ENCODE measurements at regions of chr1 and their contacts with region 1.

Region 1: GRCh38 chr1:233326811-233327650 is 493 bp upstream of the MAP3K21 start:
- DNase-seq: peak; percentile 93
- ATAC-seq: peak; percentile 96
- H3K4me3 Mint-ChIP-seq: peak overlapping the region; percentile 82
- H3K27ac Mint-ChIP-seq: peak overlapping the region; percentile 53
- H3K4me1 Mint-ChIP-seq: peaks cover 11% of the 10 kb centered on the region
- H3K27me3 Mint-ChIP-seq: no peaks in the 10 kb centered on the region
- CTCF ChIP-seq: no peak

Region 2: DNA sequence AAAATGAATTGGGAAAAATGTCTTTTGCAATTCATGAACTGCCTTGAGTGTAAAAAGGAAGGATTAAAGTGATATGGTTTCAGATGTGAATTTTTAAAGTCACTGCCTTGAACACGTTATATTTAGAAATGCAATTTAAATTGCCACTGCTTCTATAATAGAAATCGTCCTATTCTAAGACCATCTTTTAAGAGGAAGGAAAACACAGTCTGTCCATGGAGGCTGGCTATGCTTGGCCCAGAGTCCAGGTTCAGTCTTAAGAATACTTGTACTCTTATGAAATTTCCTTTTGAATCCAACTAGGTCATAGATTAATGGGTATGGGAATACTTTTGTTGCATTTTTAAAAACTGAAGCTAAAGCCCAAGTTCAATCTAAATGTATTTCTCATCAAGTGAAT is 117.5 kb before region 1 on chr1:
- CTCF ChIA-PET with region 1: no interaction called
- POLR2A ChIA-PET with region 1: no interaction called
- intact Hi-C with region 1: no loop called
- DNase-seq: no peak
- ATAC-seq: no peak
- H3K4me3 Mint-ChIP-seq: no peak overlapping the region
- H3K27ac Mint-ChIP-seq: no peak overlapping the region
- H3K4me1 Mint-ChIP-seq: no peaks in the 10 kb centered on the region
- H3K27me3 Mint-ChIP-seq: no peaks in the 10 kb centered on the region
- CTCF ChIP-seq: no peak

Region 3: GRCh38 chr1:233295237-233295974 is 31.6 kb before region 1 on chr1 and contains the start of gene PCNX2:
- CTCF ChIA-PET with region 1: no interaction called
- POLR2A ChIA-PET with region 1: no interaction called
- intact Hi-C with region 1: loop called (anchors 1 kb)
- DNase-seq: peak; percentile 41
- ATAC-seq: peak; percentile 84
- H3K4me3 Mint-ChIP-seq: peak within 1 kb of the TSS; percentile 84
- H3K27ac Mint-ChIP-seq: peak within 1 kb of the TSS; percentile 69
- H3K4me1 Mint-ChIP-seq: peaks cover 14% of the 10 kb centered on the region
- H3K27me3 Mint-ChIP-seq: peaks cover 2% of the 10 kb centered on the region
- CTCF ChIP-seq: no peak
- total RNA-seq, gene PCNX2: 18.4 and 20.4 TPM in 2 replicates

Region 4: DNA sequence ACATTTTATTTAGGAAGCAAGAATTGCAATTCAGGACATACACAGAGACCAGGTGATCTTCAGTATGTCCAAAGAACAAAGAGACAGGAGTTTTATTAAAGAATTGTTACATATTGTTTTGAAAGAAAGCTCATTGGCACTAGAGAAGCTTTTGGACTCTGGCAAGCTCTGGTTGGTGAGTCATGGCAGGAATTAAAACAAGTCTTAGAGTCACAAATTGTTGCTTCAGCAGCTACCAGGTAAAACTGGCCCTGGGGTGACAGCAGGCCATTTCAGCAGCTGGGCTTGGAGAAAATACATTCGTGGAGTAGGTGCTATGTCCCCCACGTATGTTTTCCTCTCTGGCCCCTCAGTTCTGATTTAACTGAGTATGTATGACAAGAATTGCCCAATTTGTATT is 59.3 kb after region 1 on chr1:
- CTCF ChIA-PET with region 1: no interaction called
- POLR2A ChIA-PET with region 1: no interaction called
- intact Hi-C with region 1: no loop called
- DNase-seq: no peak
- ATAC-seq: no peak
- H3K4me3 Mint-ChIP-seq: no peak overlapping the region
- H3K27ac Mint-ChIP-seq: no peak overlapping the region
- H3K4me1 Mint-ChIP-seq: no peaks in the 10 kb centered on the region
- H3K27me3 Mint-ChIP-seq: peaks cover 8% of the 10 kb centered on the region
- CTCF ChIP-seq: no peak

Measured in activated B cell treated with CpG ODN at 0.5 μM for 24 hours (primary cell).